Activated CD8-positive, alpha-beta T cell treated with anti-CD3 and anti-CD28 coated beads for 36 hours (primary cell): ENCODE measurements at regions of chr19 and their contacts with region 1.

Region 1: GRCh38 chr19:38049105-38049649 is 142.2 kb downstream of the SIPA1L3 start:
- DNase-seq: peak; percentile 74
- ATAC-seq: peak; percentile 87
- H3K4me3 Mint-ChIP-seq: peak overlapping the region; percentile 72
- H3K27ac Mint-ChIP-seq: peak overlapping the region; percentile 97
- H3K4me1 Mint-ChIP-seq: peaks cover 49% of the 10 kb centered on the region
- H3K27me3 Mint-ChIP-seq: no peaks in the 10 kb centered on the region
- CTCF ChIP-seq: no peak

Region 2: GRCh38 chr19:38061294-38061693 is 12.1 kb after region 1 on chr19:
- CTCF ChIA-PET with region 1: no interaction called
- POLR2A ChIA-PET with region 1: interaction called, 11 read pairs
- intact Hi-C with region 1: no loop called
- DNase-seq: no peak
- ATAC-seq: no peak
- H3K4me3 Mint-ChIP-seq: no peak overlapping the region
- H3K27ac Mint-ChIP-seq: no peak overlapping the region
- H3K4me1 Mint-ChIP-seq: peaks cover 13% of the 10 kb centered on the region
- H3K27me3 Mint-ChIP-seq: no peaks in the 10 kb centered on the region
- CTCF ChIP-seq: no peak

Region 3: GRCh38 chr19:38155453-38155852 is 106.3 kb after region 1 on chr19:
- CTCF ChIA-PET with region 1: no interaction called
- POLR2A ChIA-PET with region 1: no interaction called
- intact Hi-C with region 1: no loop called
- DNase-seq: no peak
- ATAC-seq: no peak
- H3K4me3 Mint-ChIP-seq: no peak overlapping the region
- H3K27ac Mint-ChIP-seq: no peak overlapping the region
- H3K4me1 Mint-ChIP-seq: no peaks in the 10 kb centered on the region
- H3K27me3 Mint-ChIP-seq: no peaks in the 10 kb centered on the region
- CTCF ChIP-seq: no peak

Region 4: DNA sequence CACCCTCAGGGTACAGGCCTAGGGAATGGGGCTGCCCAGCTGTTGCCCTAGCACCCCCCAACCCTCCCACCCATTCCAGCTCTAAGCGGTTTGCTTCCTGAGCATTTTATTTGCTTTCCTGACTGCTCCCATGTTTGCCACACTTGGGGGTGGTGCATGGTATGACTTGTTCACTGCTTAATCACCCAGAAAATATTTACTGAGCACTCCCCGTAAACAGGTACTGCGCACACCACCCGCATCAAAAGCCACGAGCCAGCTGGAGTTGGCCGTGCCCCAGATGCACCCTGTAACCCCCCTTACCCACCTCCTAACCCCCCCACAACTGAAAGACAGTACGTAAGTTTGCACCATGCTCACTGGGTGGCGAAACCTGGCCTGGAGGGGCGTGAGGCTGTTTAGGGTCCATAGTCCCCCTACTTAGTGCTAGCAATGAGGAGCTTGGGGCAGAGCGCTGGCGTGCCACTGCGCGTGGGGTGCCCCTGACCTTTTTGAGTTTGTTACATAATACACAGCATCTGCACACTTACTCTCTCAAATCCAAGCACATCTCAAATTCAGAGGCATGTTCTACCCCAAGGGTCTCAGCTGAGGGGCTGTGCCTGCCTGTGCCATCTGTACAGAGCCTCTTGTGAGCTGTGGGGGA is 145.0 kb after region 1 on chr19:
- CTCF ChIA-PET with region 1: no interaction called
- POLR2A ChIA-PET with region 1: no interaction called
- intact Hi-C with region 1: no loop called
- DNase-seq: no peak
- ATAC-seq: no peak
- H3K4me3 Mint-ChIP-seq: no peak overlapping the region
- H3K27ac Mint-ChIP-seq: no peak overlapping the region
- H3K4me1 Mint-ChIP-seq: peaks cover 6% of the 10 kb centered on the region
- H3K27me3 Mint-ChIP-seq: no peaks in the 10 kb centered on the region
- CTCF ChIP-seq: no peak